GM12878 (cell line): ENCODE measurements at regions of chr10 and their contacts with region 1.

Region 1: GRCh38 chr10:8130973-8131911 is 76.8 kb downstream of the GATA3 start:
- DNase-seq: peak; percentile 54
- ATAC-seq: peak; percentile 77
- H3K4me3 ChIP-seq: no peak overlapping the region
- H3K27ac ChIP-seq: no peak overlapping the region
- H3K4me1 ChIP-seq: peaks cover 25% of the 10 kb centered on the region
- H3K27me3 ChIP-seq: no peaks in the 10 kb centered on the region
- CTCF ChIP-seq: no peak
- EP300 ChIP-seq: no peak; a peak in 1 of 4 replicates
- POLR2A ChIP-seq: no peak
- RAD21 ChIP-seq: no peak

Region 2: GRCh38 chr10:7872041-7872442 is 259.2 kb before region 1 on chr10:
- CTCF ChIA-PET with region 1: no interaction called
- POLR2A ChIA-PET with region 1: no interaction called
- RAD21 ChIA-PET with region 1: no interaction called
- SMC1A ChIA-PET with region 1: no interaction called
- in situ Hi-C with region 1: no loop called
- intact Hi-C with region 1: loop called (anchors 10 kb)
- DNase-seq: no peak
- ATAC-seq: no peak
- H3K4me3 ChIP-seq: peak overlapping the region; percentile 47; the same call in 1 of the 2 replicates
- H3K27ac ChIP-seq: no peak overlapping the region
- H3K4me1 ChIP-seq: no peaks in the 10 kb centered on the region
- H3K27me3 ChIP-seq: no peaks in the 10 kb centered on the region
- CTCF ChIP-seq: peak; percentile 58 to 65 (median 62)
- EP300 ChIP-seq: no peak
- POLR2A ChIP-seq: no peak
- RAD21 ChIP-seq: peak; percentile 94

Region 3: GRCh38 chr10:8033812-8034465 is 97.3 kb before region 1 on chr10:
- CTCF ChIA-PET with region 1: no interaction called
- POLR2A ChIA-PET with region 1: no interaction called
- RAD21 ChIA-PET with region 1: no interaction called
- SMC1A ChIA-PET with region 1: no interaction called
- in situ Hi-C with region 1: no loop called
- intact Hi-C with region 1: no loop called
- DNase-seq: no peak
- ATAC-seq: no peak
- H3K4me3 ChIP-seq: no peak overlapping the region
- H3K27ac ChIP-seq: no peak overlapping the region
- H3K4me1 ChIP-seq: no peaks in the 10 kb centered on the region
- H3K27me3 ChIP-seq: peaks cover 15 to 24% of the 10 kb centered on the region in 2 experiments
- CTCF ChIP-seq: no peak
- EP300 ChIP-seq: no peak
- POLR2A ChIP-seq: no peak
- RAD21 ChIP-seq: no peak

Region 4: GRCh38 chr10:8059959-8060703 is 71.1 kb before region 1 on chr10:
- CTCF ChIA-PET with region 1: no interaction called
- POLR2A ChIA-PET with region 1: no interaction called
- RAD21 ChIA-PET with region 1: interaction called, 3 read pairs
- SMC1A ChIA-PET with region 1: no interaction called
- in situ Hi-C with region 1: no loop called
- intact Hi-C with region 1: loop called (anchors 2 kb)
- DNase-seq: peak; percentile 55
- ATAC-seq: peak; percentile 52
- H3K4me3 ChIP-seq: peak overlapping the region; percentile 53
- H3K27ac ChIP-seq: peak overlapping the region; percentile 78
- H3K4me1 ChIP-seq: peaks cover 16% of the 10 kb centered on the region
- H3K27me3 ChIP-seq: no peaks in the 10 kb centered on the region
- CTCF ChIP-seq: no peak
- EP300 ChIP-seq: no peak
- POLR2A ChIP-seq: peak; percentile 36; the same call in 1 of the 2 replicates
- RAD21 ChIP-seq: no peak

Region 5: GRCh38 chr10:8146650-8147049 is 15.4 kb after region 1 on chr10:
- CTCF ChIA-PET with region 1: no interaction called
- POLR2A ChIA-PET with region 1: no interaction called
- RAD21 ChIA-PET with region 1: no interaction called
- SMC1A ChIA-PET with region 1: no interaction called
- in situ Hi-C with region 1: no loop called
- intact Hi-C with region 1: no loop called
- DNase-seq: no peak
- ATAC-seq: no peak
- H3K4me3 ChIP-seq: no peak overlapping the region
- H3K27ac ChIP-seq: no peak overlapping the region
- H3K4me1 ChIP-seq: no peaks in the 10 kb centered on the region
- H3K27me3 ChIP-seq: no peaks in the 10 kb centered on the region; a peak in 1 of 4 replicates
- CTCF ChIP-seq: no peak
- EP300 ChIP-seq: no peak
- POLR2A ChIP-seq: no peak
- RAD21 ChIP-seq: no peak

Region 6: GRCh38 chr10:8159341-8160165 is 28.3 kb after region 1 on chr10:
- CTCF ChIA-PET with region 1: no interaction called
- POLR2A ChIA-PET with region 1: no interaction called
- RAD21 ChIA-PET with region 1: no interaction called
- SMC1A ChIA-PET with region 1: no interaction called
- in situ Hi-C with region 1: no loop called
- intact Hi-C with region 1: no loop called
- DNase-seq: no peak
- ATAC-seq: no peak
- H3K4me3 ChIP-seq: no peak overlapping the region
- H3K27ac ChIP-seq: no peak overlapping the region
- H3K4me1 ChIP-seq: no peaks in the 10 kb centered on the region
- H3K27me3 ChIP-seq: no peaks in the 10 kb centered on the region
- CTCF ChIP-seq: no peak
- EP300 ChIP-seq: no peak
- POLR2A ChIP-seq: no peak
- RAD21 ChIP-seq: no peak

Region 7: DNA sequence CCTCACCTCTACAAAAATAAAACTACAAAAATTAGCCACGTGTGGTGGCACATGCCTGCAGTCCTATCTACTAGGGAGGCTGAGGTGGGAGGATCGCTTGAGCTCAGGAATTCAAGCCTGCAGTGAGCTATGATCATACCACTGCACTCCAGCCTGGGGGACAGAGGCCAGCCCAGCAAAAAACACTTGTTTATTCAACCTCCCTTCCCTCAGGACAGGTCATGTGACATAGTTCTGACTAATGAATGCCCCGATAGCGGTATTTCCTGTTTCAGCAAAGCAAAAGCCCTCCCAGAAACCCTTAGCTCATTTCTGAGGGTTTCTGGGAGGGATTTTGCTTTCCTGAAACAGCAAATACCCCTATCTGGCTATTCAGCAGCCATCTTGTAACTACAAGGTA is 80.4 kb after region 1 on chr10:
- CTCF ChIA-PET with region 1: no interaction called
- POLR2A ChIA-PET with region 1: no interaction called
- RAD21 ChIA-PET with region 1: no interaction called
- SMC1A ChIA-PET with region 1: no interaction called
- in situ Hi-C with region 1: no loop called
- intact Hi-C with region 1: no loop called
- DNase-seq: no peak
- ATAC-seq: no peak
- H3K4me3 ChIP-seq: no peak overlapping the region
- H3K27ac ChIP-seq: no peak overlapping the region
- H3K4me1 ChIP-seq: no peaks in the 10 kb centered on the region
- H3K27me3 ChIP-seq: no peaks in the 10 kb centered on the region
- CTCF ChIP-seq: no peak
- EP300 ChIP-seq: no peak
- POLR2A ChIP-seq: no peak
- RAD21 ChIP-seq: no peak

Region 8: DNA sequence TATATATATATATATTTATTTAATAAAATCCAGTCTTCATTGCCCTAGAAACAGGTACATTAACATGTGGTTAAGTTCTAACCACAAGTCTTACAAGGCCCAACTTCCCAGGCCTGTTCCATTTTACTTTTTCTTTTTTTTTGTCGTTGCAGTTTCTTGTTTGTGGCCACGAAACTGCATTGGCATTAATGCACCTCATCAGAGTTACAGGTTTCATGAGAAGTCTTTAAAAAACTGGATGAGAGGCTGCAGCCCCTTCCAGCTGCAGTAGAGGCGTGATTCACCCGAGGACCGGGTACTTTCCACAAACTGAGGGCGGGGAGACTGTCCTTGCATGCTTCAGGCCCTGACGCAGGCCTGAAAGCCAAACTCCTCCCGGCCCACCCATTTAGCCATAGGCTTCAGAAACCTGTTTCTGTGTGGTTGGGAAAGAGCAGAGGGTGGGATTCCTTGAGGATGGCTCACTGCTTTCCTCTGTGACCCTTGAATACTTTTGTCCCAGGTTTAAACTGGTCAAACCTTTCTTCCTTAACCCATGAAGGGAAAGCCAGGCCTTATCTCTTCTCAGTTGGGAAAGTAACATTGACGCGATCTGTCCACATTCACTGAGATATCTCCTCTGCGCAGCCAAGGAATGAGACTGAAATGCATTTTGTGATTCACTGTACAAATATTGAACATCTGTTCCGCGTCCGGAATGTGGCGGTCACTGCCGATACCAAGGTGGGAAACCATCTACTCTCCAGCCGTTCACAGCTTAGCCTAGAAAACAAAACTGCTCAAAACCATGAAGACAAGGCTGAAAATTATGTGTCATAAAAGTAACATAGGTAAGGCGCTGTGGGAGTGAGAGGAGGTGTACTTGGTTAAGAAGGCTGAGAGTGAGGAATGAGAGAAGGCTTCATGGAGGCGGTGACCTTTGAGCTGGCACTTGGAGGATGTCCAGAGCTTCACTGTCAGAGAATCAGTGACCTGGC is 235.0 kb after region 1 on chr10:
- CTCF ChIA-PET with region 1: no interaction called
- POLR2A ChIA-PET with region 1: no interaction called
- RAD21 ChIA-PET with region 1: no interaction called
- SMC1A ChIA-PET with region 1: no interaction called
- in situ Hi-C with region 1: no loop called
- intact Hi-C with region 1: loop called (anchors 5 kb)
- DNase-seq: peak; percentile 12
- ATAC-seq: peak; percentile 76
- H3K4me3 ChIP-seq: no peak overlapping the region
- H3K27ac ChIP-seq: no peak overlapping the region
- H3K4me1 ChIP-seq: peaks cover 2% of the 10 kb centered on the region
- H3K27me3 ChIP-seq: no peaks in the 10 kb centered on the region
- CTCF ChIP-seq: 0 out of 6 replicates have a peak, but pooled peaks of 1 of the 3 experiments have one; percentile 2
- EP300 ChIP-seq: no peak
- POLR2A ChIP-seq: no peak
- RAD21 ChIP-seq: no peak